ENCODE measurements at regions of chr2 and their contacts with region 1.

Region 1: DNA sequence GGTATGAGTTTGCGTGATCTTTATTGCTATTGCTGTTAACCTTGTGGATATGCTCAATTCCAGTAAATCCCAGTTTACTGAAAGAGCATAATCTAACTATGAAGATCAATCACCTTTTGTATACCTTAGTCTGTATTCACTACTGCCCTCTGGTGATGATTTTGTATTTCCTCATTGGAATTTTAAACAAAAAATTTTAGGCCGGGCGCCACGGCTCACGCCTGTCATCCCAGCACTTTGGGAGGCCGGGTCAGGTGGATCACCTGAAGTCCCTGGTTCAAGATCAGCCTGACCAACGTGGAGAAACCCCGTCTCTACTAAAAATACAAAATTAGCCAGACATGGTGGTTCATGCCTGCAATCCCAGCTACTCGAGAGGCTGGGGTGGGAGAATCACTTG is 5.1 kb downstream of the COMMD1 start:
- DNase-seq: no peak
- ATAC-seq: no peak
- H3K4me3 ChIP-seq: no peak overlapping the region
- H3K27ac ChIP-seq: no peak overlapping the region
- H3K4me1 ChIP-seq: peaks cover 0 to 32% (median 24%) of the 10 kb centered on the region in 9 donors
- H3K27me3 ChIP-seq: no peaks in the 10 kb centered on the region
- CTCF ChIP-seq: peak in 6 of 9 donors; percentile 12 to 23 (median 20)

Region 2: GRCh38 chr2:61928826-61929461 is 18.3 kb after region 1 on chr2:
- intact Hi-C with region 1: no loop called
- DNase-seq: no peak
- ATAC-seq: peak in 5 of 8 donors; percentile 63 to 86 (median 80)
- H3K4me3 ChIP-seq: no peak overlapping the region
- H3K27ac ChIP-seq: peak overlapping the region in 6 of 10 donors; percentile 10 to 81 (median 71)
- H3K4me1 ChIP-seq: peaks cover 0 to 17% (median 5%) of the 10 kb centered on the region in 9 donors
- H3K27me3 ChIP-seq: no peaks in the 10 kb centered on the region
- CTCF ChIP-seq: no peak

Region 3: DNA sequence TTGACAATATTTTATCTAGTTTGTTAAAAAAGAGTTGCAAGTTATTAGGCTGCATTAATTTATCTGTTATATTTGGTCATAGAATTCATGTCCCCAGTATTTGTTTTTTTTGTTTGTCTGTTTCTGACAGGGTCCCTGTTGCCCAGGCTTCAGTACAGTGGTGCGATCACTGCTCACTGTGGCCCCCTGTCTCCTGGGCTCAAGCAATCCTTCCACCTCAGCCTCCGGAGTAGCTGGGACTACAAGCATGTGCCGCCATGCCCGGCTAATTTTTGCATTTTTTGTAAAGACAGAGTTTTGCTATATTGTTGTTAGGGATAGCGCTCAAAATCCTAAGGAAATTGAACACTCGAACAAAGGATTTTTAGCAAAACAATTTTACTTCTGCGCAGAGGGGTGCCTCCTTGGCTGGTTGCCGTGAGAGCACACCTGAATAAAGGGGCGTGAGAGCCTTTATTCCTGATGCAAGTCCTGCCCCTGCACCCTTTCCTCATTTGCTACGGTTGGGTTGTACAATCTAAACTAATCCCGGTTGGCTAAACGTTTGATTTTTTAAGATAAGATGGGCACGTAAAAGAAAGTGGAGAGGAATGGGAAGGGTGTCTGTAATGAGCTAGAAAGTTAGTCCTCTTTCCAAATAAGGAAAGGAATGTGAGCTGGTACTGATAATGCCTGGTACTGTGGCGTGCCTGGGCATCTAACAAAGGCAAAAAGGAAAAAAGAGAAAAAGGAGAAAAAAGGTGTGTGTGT is 60.4 kb after region 1 on chr2:
- intact Hi-C with region 1: no loop called
- DNase-seq: no peak
- ATAC-seq: peak in 5 of 8 donors; percentile 58 to 88 (median 69)
- H3K4me3 ChIP-seq: peak overlapping the region in 4 of 10 donors; percentile 1 to 32 (median 12)
- H3K27ac ChIP-seq: peak overlapping the region in 5 of 10 donors; percentile 49 to 75 (median 68)
- H3K4me1 ChIP-seq: peaks cover 0 to 29% (median 19%) of the 10 kb centered on the region in 9 donors
- H3K27me3 ChIP-seq: no peaks in the 10 kb centered on the region
- CTCF ChIP-seq: peak in 3 of 9 donors; percentile 9 to 37 (median 10)

Region 4: DNA sequence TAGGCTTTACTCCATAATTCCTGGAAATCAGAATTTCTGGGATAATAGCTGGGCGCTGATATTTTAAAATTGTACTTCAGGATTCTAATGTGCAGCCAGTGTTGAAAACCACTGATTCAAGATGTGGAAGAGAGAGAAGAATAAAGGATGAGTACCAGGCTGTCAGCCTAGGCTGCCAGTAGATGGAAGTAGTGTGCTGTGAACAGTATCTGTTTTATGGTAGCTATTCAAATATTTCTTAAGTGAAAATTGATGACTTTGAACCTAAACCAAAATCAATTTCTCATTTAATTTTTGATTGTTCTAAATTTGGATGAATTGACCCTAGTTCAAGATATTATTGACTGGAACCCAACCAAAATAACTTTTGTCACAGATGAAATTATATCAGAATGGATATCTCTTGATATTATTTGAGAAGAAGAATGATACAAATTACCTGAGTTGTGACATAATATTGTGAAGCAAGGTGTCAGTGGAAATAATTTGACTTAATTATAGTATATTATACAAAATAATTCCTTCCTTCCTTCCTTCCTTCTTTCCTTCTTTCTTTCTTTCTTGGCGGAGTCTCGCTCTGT is 82.9 kb after region 1 on chr2:
- intact Hi-C with region 1: loop called in 2 of 10 experiments (anchors 5 kb)
- DNase-seq: peak in 1 of 2 donors; percentile 34
- ATAC-seq: peak in 7 of 8 donors; percentile 49 to 84 (median 74)
- H3K4me3 ChIP-seq: no peak overlapping the region
- H3K27ac ChIP-seq: no peak overlapping the region
- H3K4me1 ChIP-seq: peaks cover 0 to 35% (median 19%) of the 10 kb centered on the region in 9 donors
- H3K27me3 ChIP-seq: no peaks in the 10 kb centered on the region
- CTCF ChIP-seq: peak; percentile 37 to 87 (median 70)

Measured in heart right ventricle (tissue), 16 donors.